Activated CD4-positive, alpha-beta T cell treated with anti-CD3 and anti-CD28 coated beads for 36 hours (primary cell): ENCODE measurements at regions of chr18 and their contacts with region 1.

Region 1: GRCh38 chr18:32072321-32072720 is 19.4 kb upstream of the RNF138 start:
- DNase-seq: no peak
- ATAC-seq: no peak
- H3K4me3 Mint-ChIP-seq: no peak overlapping the region
- H3K27ac Mint-ChIP-seq: no peak overlapping the region
- H3K4me1 Mint-ChIP-seq: peaks cover 23% of the 10 kb centered on the region
- H3K27me3 Mint-ChIP-seq: no peaks in the 10 kb centered on the region

Region 2: GRCh38 chr18:32048507-32049091 is 23.7 kb before region 1 on chr18:
- CTCF ChIA-PET with region 1: interaction called, 20 read pairs
- POLR2A ChIA-PET with region 1: no interaction called
- intact Hi-C with region 1: no loop called
- DNase-seq: peak; percentile 52
- ATAC-seq: peak; percentile 62
- H3K4me3 Mint-ChIP-seq: no peak overlapping the region
- H3K27ac Mint-ChIP-seq: peak overlapping the region; percentile 84
- H3K4me1 Mint-ChIP-seq: peaks cover 42% of the 10 kb centered on the region
- H3K27me3 Mint-ChIP-seq: no peaks in the 10 kb centered on the region

Region 3: GRCh38 chr18:32086861-32087260 is 14.5 kb after region 1 on chr18:
- CTCF ChIA-PET with region 1: interaction called, 9 read pairs
- POLR2A ChIA-PET with region 1: interaction called, 3 read pairs
- intact Hi-C with region 1: loop called in 1 of 2 experiments (anchors 1 kb)
- DNase-seq: no peak
- ATAC-seq: no peak
- H3K4me3 Mint-ChIP-seq: no peak overlapping the region
- H3K27ac Mint-ChIP-seq: no peak overlapping the region
- H3K4me1 Mint-ChIP-seq: peaks cover 34% of the 10 kb centered on the region
- H3K27me3 Mint-ChIP-seq: no peaks in the 10 kb centered on the region